Mammary epithelial cell (primary cell): ENCODE measurements at regions of chr5 and their contacts with region 1.

Region 1: DNA sequence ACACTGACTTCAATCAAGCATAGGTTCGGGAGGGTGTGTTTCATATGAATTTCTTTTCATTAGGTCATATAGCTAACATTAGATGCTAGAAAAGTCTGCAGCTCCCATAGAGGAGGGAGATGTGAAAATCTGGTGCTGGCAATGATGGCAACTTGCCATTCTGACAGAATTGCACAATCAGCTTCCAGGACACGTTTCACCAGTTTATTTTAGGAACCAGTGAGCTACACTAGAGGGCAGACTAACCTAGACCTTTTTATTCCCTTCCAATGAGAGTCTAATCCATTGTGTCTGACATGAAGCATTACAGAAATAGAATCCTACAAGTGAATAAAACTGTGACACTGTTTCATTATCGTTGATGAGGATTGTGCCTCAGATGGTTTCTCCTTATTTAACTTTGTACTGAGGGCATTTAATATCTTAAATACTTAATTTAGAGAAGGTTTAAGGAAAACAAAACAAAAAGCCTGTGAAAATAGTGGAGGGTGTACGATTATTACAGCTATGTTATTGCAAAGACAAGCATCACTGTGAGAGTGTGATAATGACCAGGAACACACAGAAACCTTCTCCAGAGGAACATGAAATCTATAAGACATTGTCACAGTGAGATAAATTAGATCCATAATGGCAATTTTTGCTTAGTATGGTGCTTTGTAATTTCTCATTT is 363.3 kb upstream of the RPS23 start:
- DNase-seq: peak; percentile 76
- H3K4me3 ChIP-seq: no peak overlapping the region
- H3K27ac ChIP-seq: no peak overlapping the region
- H3K4me1 ChIP-seq: peaks cover under 1% of the 10 kb centered on the region
- H3K27me3 ChIP-seq: no peaks in the 10 kb centered on the region
- CTCF ChIP-seq: peak; percentile 65 to 78

Region 2: GRCh38 chr5:82406205-82406773 is 235.2 kb before region 1 on chr5:
- CTCF ChIA-PET with region 1: no interaction called
- dilution Hi-C with region 1: no loop called
- in situ Hi-C with region 1: no loop called
- intact Hi-C with region 1: loop called (anchors 5 kb)
- DNase-seq: peak; percentile 100
- H3K4me3 ChIP-seq: peak overlapping the region in 2 of 3 experiments; percentile 22 to 45
- H3K27ac ChIP-seq: peak overlapping the region; percentile 100
- H3K4me1 ChIP-seq: peaks cover 25% of the 10 kb centered on the region
- H3K27me3 ChIP-seq: no peaks in the 10 kb centered on the region
- CTCF ChIP-seq: no peak

Region 3: DNA sequence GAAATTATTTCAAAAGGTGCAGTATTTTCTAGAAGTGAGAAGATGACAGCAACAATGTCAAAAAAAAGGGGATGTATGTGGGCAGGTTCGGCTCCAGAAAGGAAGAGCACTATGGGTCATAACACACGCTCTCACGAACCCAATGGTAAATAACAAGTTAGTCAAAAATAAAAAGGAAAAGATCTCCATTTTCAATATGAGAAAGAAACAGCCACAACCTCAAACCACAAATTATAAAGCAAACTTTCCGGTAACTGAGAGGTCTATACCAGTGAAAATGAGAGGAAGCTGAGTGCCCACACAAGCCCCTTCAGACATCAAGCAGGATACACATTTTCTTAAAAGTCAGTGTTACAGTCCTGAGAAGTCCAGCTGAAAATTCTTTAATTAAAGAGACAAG is 35.2 kb after region 1 on chr5:
- CTCF ChIA-PET with region 1: no interaction called
- dilution Hi-C with region 1: no loop called
- in situ Hi-C with region 1: no loop called
- intact Hi-C with region 1: no loop called
- DNase-seq: no peak
- H3K4me3 ChIP-seq: no peak overlapping the region
- H3K27ac ChIP-seq: no peak overlapping the region
- H3K4me1 ChIP-seq: no peaks in the 10 kb centered on the region
- H3K27me3 ChIP-seq: no peaks in the 10 kb centered on the region
- CTCF ChIP-seq: no peak

Region 4: DNA sequence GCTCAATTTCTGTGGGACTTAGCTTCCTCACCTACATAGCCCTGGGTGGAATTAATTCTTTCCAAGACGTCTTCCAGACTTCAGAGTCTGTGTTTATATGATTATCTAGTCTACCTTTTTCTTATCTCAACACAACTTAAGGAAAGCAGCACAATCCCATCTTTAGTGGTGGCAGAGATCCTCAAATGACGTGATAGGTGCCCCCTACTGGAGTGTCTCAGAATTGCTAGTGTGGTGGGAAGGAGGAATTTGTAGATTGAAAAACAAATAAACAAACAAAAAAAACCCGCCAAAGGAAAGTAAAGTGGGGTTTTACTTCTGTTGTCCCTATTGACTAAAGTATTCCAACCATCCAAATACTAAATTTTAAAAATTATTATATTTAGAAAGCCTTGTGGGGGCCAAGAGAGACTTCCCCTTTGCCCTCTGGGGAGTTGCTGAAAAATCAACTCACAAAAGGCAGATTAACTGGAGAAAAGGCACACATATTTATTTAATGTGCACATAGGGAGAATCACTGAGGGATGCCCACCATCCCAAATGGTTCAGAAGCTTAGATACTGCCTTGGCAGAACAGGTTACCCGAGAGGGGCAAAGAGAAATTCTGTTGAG is 152.4 kb after region 1 on chr5:
- CTCF ChIA-PET with region 1: no interaction called
- dilution Hi-C with region 1: no loop called
- in situ Hi-C with region 1: no loop called
- intact Hi-C with region 1: loop called (anchors 2 kb)
- DNase-seq: no peak
- H3K4me3 ChIP-seq: no peak overlapping the region
- H3K27ac ChIP-seq: no peak overlapping the region
- H3K4me1 ChIP-seq: peaks cover 3% of the 10 kb centered on the region
- H3K27me3 ChIP-seq: no peaks in the 10 kb centered on the region
- CTCF ChIP-seq: peak; percentile 73 to 74

Region 5: GRCh38 chr5:83076742-83077661 is 435.5 kb after region 1 on chr5 and contains the starts of genes TMEM167A and XRCC4:
- CTCF ChIA-PET with region 1: interaction called, 3 read pairs
- dilution Hi-C with region 1: no loop called
- in situ Hi-C with region 1: no loop called
- intact Hi-C with region 1: loop called (anchors 2 kb)
- DNase-seq: peak; percentile 98
- H3K4me3 ChIP-seq: peak within 1 kb of the TSS; percentile 75 to 91 (median 86)
- H3K27ac ChIP-seq: peak within 1 kb of the TSS; percentile 87
- H3K4me1 ChIP-seq: peaks cover 8% of the 10 kb centered on the region
- H3K27me3 ChIP-seq: no peaks in the 10 kb centered on the region
- CTCF ChIP-seq: no peak
- total RNA-seq, gene TMEM167A: 49.8 to 88.5 TPM
- total RNA-seq, gene XRCC4: 6.3 to 8.3 TPM

Region 6: DNA sequence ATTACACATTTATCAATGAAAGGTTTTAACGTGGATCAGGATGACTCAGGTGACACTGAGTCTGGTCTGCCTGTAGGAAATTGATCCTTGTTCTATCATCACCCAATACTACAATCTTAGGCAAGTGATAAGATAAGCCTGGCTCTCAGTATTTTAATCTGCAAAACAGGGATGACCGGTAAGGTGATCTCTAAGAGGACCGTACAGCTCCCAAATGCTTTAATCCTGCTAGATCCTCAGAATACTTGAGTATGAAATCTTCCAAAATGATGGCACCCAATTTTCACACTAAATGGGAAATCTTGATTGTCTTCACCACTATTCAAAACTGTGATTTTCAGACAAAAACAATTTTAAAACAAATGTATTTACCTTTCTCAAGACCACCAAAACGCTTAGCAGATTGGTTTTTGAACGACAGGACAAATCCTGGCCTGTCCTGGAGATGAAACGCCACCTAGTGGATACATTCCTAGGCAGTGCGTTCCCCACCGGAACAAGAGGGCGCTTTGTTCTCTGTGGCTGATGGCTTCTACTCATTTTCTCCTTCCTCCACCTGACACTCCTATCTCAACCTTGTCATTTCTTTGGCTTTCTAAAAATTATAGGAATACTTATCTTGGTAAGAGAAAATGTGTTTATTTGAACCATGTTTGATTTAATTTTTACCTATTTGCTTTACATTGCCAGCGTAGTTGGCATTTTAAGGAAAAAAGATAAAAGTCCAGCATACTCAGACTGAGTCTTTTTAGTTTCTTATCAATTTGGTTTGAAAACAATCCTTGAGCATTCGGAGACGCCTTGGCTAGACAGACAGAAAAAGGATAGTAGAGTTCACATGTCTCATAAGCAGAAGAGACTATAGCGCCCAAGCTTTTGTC is 788.9 kb after region 1 on chr5:
- CTCF ChIA-PET with region 1: no interaction called
- dilution Hi-C with region 1: no loop called
- in situ Hi-C with region 1: loop called in 1 of 2 experiments (anchors 25 kb)
- intact Hi-C with region 1: loop called (anchors 1 kb)
- DNase-seq: peak; percentile 46
- H3K4me3 ChIP-seq: no peak overlapping the region
- H3K27ac ChIP-seq: no peak overlapping the region
- H3K4me1 ChIP-seq: no peaks in the 10 kb centered on the region
- H3K27me3 ChIP-seq: no peaks in the 10 kb centered on the region
- CTCF ChIP-seq: peak; percentile 95

Region 7: DNA sequence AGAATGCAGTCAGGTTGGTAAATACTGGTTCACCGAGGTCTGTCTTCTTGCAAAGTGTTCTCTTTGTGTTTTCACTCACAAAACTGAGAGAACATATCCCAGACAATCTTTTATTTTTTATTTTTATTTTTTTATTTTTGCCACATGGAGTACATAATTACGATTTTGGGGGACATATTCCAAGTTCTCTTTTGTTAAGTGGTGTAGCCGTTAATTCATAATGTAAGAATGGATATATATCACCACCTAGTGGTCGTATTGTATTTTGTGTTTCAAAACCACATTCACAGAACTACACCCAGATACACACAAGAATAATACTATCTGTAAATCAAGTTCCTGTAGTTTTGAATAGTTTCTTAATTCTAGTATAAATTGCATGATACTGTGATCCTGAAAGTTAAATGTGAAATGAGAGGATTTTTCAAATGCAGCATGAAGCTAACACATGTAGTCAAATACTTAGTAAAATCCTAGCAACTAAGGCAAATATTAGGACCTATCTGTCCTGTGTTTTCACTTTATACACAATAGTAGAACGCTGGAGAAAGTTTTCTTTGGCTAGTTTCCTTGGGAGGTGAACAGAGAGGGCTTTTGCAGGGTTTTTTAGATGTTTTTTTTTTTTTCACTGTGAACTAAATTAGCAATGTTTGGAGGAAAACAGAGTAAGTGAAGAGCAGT is 922.7 kb after region 1 on chr5:
- CTCF ChIA-PET with region 1: no interaction called
- dilution Hi-C with region 1: no loop called
- in situ Hi-C with region 1: loop called (anchors 25 kb)
- intact Hi-C with region 1: loop called (anchors 1 kb)
- DNase-seq: peak; percentile 21
- H3K4me3 ChIP-seq: no peak overlapping the region
- H3K27ac ChIP-seq: no peak overlapping the region
- H3K4me1 ChIP-seq: peaks cover 12% of the 10 kb centered on the region
- H3K27me3 ChIP-seq: no peaks in the 10 kb centered on the region
- CTCF ChIP-seq: peak; percentile 40 to 51